Ascending aorta (tissue), 2 donors: ENCODE measurements at regions of chr16 and their contacts with region 1.

Region 1: GRCh38 chr16:73058221-73058615 is 10.3 kb upstream of the ZFHX3 start:
- DNase-seq: peak in 1 of 2 donors; percentile 70
- H3K4me3 ChIP-seq: peak overlapping the region; percentile 85 to 88
- H3K27ac ChIP-seq: peak overlapping the region; percentile 98 to 99
- H3K4me1 ChIP-seq: peaks cover 4 to 19% of the 10 kb centered on the region in 2 donors
- H3K27me3 ChIP-seq: no peaks in the 10 kb centered on the region
- CTCF ChIP-seq: no peak

Region 2: DNA sequence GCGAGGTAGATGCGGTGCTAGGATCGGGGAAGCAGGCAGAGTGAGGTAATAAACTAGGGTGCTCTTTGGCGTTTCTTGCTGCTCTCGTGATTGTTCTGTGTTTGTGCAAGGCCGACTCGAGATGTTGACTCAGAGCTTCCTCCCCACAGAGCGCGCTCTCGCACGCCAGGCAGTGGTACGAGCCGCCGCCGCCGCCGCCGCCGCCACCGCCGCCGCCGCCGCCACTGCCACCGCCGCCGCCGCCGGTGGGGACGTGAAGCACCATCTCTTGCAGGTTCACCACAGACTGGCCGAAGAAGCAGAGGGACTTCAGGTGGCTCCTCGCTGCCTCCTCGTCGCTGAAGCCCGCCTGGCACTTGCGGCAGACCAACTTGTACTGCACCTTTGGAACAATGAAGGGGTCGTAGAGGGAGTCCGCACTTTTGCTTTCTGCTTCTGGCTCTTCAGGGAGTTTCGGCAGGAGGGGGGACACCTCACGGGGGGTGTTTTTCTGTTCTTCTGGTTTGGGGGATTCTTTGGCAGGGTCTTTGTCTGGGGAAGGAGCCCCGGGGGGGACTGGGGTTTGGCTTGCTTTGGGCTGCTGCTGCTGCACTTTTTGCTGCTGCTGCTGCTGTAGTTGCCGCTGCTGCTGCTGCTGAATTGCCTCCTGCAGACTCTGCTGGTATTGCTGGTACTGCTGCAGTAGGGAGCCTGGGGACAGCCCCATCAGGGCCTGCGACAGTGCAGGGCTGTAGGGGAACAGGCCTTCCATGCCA is 270.5 kb before region 1 on chr16:
- intact Hi-C with region 1: loop called (anchors 5 kb)
- DNase-seq: peak; percentile 65 to 90
- H3K4me3 ChIP-seq: peak overlapping the region; percentile 56 to 71
- H3K27ac ChIP-seq: peak overlapping the region; percentile 87
- H3K4me1 ChIP-seq: peaks cover 5 to 12% of the 10 kb centered on the region in 2 donors
- H3K27me3 ChIP-seq: no peaks in the 10 kb centered on the region
- CTCF ChIP-seq: no peak